Pancreas (tissue), 10 donors: ENCODE measurements at regions of chr2 and their contacts with region 1.

Region 1: GRCh38 chr2:152620208-152620607 is 97.1 kb downstream of the PRPF40A start:
- DNase-seq: no peak
- ATAC-seq: no peak
- H3K4me3 ChIP-seq: no peak overlapping the region
- H3K27ac ChIP-seq: no peak overlapping the region
- H3K4me1 ChIP-seq: no peaks in the 10 kb centered on the region
- H3K27me3 ChIP-seq: no peaks in the 10 kb centered on the region
- CTCF ChIP-seq: no peak

Region 2: GRCh38 chr2:152189622-152190495 is 430.3 kb before region 1 on chr2:
- intact Hi-C with region 1: loop called in 1 of 3 experiments (anchors 5 kb)
- DNase-seq: peak in 1 of 6 donors; percentile 47
- ATAC-seq: peak; percentile 78 to 94 (median 93)
- H3K4me3 ChIP-seq: no peak overlapping the region
- H3K27ac ChIP-seq: no peak overlapping the region
- H3K4me1 ChIP-seq: no peaks in the 10 kb centered on the region
- H3K27me3 ChIP-seq: no peaks in the 10 kb centered on the region
- CTCF ChIP-seq: peak; percentile 7 to 56 (median 50)